ENCODE measurements at regions of chr5 and their contacts with region 1.

Region 1: DNA sequence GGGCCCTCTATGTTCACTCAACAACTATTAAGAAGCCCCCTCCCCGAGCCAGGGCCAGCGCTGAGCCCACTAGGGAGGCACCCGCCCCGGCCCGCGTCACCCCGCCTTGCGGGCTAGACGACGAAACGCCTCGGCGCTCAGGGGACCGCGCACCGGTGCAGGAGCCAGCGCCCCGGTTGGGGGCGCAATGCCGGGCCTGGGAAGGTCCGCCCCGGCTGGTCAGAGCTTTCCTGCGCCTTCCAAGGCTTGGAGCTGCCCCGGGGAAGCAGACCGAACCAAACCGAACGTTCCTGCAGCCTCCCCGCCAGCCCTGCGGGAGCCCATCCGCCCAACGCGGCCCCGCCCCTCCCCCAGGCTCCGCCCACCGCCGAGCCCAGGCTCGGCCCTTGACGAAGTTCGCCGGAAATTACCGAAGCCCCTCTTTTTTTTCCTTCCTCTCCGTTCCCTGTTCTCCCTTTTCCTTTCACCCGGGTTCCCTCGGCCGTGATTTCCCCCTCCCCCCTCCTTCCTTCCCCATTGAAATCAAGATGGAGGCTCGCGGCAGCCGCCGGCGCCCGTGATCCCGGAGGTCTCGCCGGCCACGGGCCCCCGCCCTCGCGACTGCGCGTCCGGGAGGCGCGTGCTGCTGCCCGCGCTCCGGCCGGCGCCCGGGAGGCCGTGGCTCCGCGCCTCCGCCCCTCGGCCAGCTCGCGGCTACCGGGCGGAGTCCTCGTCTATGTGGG is at the start of gene TRIO:
- DNase-seq: peak; percentile 67 to 82 (median 77)
- H3K4me3 ChIP-seq: peak within 1 kb of the TSS; percentile 79 to 94 (median 83)
- H3K27ac ChIP-seq: peak within 1 kb of the TSS; percentile 46 to 66
- H3K4me1 ChIP-seq: peaks cover 9 to 36% (median 26%) of the 10 kb centered on the region in 4 experiments
- H3K27me3 ChIP-seq: no peaks in the 10 kb centered on the region

Region 2: GRCh38 chr5:14250084-14250695 is 107.2 kb after region 1 on chr5:
- CTCF ChIA-PET with region 1: interaction called, 16 read pairs
- POLR2A ChIA-PET with region 1: no interaction called
- DNase-seq: peak in 2 of 3 donors; percentile 58 to 66
- H3K4me3 ChIP-seq: peak overlapping the region in 1 of 7 experiments; percentile 25
- H3K27ac ChIP-seq: no peak overlapping the region
- H3K4me1 ChIP-seq: peaks cover 10 to 24% (median 16%) of the 10 kb centered on the region in 4 experiments
- H3K27me3 ChIP-seq: no peaks in the 10 kb centered on the region

Measured in common myeloid progenitor, CD34-positive (primary cell).